T-cell (primary cell): ENCODE measurements at regions of chrX and their contacts with region 1.

Region 1: DNA sequence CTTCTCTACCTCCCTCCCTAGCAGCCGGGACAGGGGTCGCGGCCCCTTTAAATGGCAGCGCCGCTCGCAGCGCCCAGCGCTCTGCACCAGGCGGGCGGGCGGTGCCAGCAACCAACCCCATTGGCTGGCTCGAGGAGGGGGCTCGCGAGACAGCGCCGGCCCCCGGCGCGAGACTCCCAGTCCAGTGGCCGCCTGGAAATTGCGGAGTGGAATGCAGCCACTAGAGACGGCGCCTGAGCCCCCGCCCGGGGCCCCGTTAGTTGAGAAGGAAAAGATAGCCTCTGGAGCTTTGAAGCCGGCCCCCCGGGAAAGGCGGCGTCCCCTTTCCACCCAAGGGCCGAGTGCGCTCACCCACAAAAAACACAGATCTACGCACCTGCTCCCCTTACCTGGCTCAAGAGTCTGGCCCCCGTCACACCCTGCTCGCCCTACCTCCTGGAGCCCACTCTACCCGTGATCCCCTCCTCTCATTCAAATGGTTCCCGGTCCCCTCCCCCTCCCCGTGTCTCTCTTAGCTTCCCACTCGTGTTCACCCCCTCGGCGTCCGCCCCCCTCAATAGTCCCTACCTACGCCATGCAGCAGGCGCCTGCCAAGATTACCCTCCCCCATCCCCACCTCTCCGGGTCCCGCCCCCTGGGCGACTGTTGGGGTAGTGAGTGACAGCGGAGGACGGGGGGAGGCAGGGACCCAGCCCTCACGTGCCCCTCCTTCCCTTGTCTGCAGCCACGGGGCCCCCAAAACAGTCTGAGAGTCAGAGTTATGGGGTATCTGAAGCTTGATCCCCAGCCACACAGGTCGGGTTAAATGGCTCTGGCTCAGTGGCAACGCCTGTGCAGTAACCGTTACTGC is at the start of gene ZMYM3:
- DNase-seq: peak; percentile 55 to 85 (median 76)
- ATAC-seq: peak; percentile 83 to 88 (median 84)
- H3K4me3 ChIP-seq: peak within 1 kb of the TSS; percentile 67 to 86
- H3K4me3 Mint-ChIP-seq: peak within 1 kb of the TSS; percentile 89 to 92 (median 89)
- H3K27ac ChIP-seq: peak within 1 kb of the TSS; percentile 90
- H3K27ac Mint-ChIP-seq: peak within 1 kb of the TSS; percentile 89 to 93
- H3K4me1 ChIP-seq: peaks cover 0 to 26% of the 10 kb centered on the region in 2 experiments
- H3K4me1 Mint-ChIP-seq: peaks cover 21 to 34% (median 26%) of the 10 kb centered on the region in 3 donors
- H3K27me3 ChIP-seq: no peaks in the 10 kb centered on the region
- H3K27me3 Mint-ChIP-seq: no peaks in the 10 kb centered on the region
- total RNA-seq, gene ZMYM3: 23.6 to 32.4 (median 28.7) TPM

Region 2: GRCh38 chrX:71283403-71284143 is 29.3 kb after region 1 on chrX and contains the start of gene NONO:
- CTCF ChIA-PET with region 1: interaction called, 3 to 22 read pairs
- POLR2A ChIA-PET with region 1: interaction called, 5 to 9 read pairs
- DNase-seq: peak; percentile 51 to 96 (median 81)
- ATAC-seq: peak; percentile 90 to 95 (median 92)
- H3K4me3 ChIP-seq: peak within 1 kb of the TSS; percentile 66 to 79
- H3K4me3 Mint-ChIP-seq: peak within 1 kb of the TSS; percentile 92 to 97 (median 97)
- H3K27ac ChIP-seq: peak within 1 kb of the TSS; percentile 96
- H3K27ac Mint-ChIP-seq: peak within 1 kb of the TSS; percentile 98 to 99
- H3K4me1 ChIP-seq: peaks cover 9 to 23% of the 10 kb centered on the region in 2 experiments
- H3K4me1 Mint-ChIP-seq: peaks cover 9 to 24% (median 19%) of the 10 kb centered on the region in 3 donors
- H3K27me3 ChIP-seq: no peaks in the 10 kb centered on the region
- H3K27me3 Mint-ChIP-seq: peaks cover 0 to 7% of the 10 kb centered on the region in 2 donors
- total RNA-seq, gene NONO: 322 to 419 (median 348) TPM